ENCODE measurements at regions of chr1 and their contacts with region 1.

Region 1: GRCh38 chr1:2212542-2213491 is 15.3 kb upstream of the SKI start:
- DNase-seq: peak; percentile 81
- ATAC-seq: peak; percentile 73
- H3K4me3 Mint-ChIP-seq: no peak overlapping the region
- H3K27ac Mint-ChIP-seq: peak overlapping the region; percentile 49
- H3K4me1 Mint-ChIP-seq: peaks cover 8% of the 10 kb centered on the region
- H3K27me3 Mint-ChIP-seq: no peaks in the 10 kb centered on the region

Region 2: DNA sequence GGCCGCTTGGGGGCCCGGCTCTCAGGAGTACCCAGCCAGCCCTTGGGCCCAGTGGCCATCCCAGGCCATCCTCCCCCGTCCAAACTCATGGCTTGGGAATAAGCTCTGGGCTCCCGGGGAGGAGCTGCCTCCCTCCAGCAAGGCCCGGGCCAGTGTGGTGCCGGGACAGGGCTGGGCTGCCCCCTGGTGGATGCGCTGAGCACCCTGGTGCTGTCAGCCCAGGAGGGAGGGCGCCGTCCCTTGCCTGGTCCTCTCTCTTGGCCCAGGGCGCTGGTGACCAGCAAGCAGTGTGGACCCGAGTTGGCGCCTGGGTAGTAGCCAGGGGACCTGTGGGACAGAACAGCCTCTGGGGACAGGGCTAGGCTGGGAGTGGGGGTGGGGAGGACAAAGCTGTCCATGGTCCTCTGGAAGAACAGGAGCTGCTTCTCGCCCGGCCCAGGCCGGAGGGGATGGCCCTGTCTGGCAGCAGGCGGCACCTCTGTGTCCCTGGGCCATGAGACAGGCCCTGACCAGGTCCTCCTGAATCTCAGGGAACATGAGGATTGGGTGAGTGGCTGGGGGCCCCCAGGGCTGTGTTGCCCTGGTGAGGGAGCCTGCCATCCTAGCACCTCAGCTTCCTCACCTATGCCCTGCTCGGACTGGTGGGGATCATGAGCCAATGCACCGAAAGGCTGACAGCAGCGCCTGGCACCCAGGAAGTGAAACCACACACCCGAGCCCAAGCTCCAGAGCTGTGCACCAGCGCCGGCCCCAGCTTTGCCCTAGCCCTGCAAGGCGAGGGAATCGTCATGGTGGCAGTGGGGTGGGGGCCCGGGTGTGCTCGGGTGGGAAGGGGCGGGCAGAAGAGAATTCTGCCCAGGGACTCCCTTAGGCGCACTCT is 169.2 kb after region 1 on chr1:
- CTCF ChIA-PET with region 1: interaction called, 17 read pairs
- DNase-seq: peak; percentile 85
- ATAC-seq: peak; percentile 98
- H3K4me3 Mint-ChIP-seq: no peak overlapping the region
- H3K27ac Mint-ChIP-seq: no peak overlapping the region
- H3K4me1 Mint-ChIP-seq: peaks cover 2% of the 10 kb centered on the region
- H3K27me3 Mint-ChIP-seq: no peaks in the 10 kb centered on the region